Sciatic nerve (tissue), 2 donors: ENCODE measurements at regions of chr4 and their contacts with region 1.

Region 1: DNA sequence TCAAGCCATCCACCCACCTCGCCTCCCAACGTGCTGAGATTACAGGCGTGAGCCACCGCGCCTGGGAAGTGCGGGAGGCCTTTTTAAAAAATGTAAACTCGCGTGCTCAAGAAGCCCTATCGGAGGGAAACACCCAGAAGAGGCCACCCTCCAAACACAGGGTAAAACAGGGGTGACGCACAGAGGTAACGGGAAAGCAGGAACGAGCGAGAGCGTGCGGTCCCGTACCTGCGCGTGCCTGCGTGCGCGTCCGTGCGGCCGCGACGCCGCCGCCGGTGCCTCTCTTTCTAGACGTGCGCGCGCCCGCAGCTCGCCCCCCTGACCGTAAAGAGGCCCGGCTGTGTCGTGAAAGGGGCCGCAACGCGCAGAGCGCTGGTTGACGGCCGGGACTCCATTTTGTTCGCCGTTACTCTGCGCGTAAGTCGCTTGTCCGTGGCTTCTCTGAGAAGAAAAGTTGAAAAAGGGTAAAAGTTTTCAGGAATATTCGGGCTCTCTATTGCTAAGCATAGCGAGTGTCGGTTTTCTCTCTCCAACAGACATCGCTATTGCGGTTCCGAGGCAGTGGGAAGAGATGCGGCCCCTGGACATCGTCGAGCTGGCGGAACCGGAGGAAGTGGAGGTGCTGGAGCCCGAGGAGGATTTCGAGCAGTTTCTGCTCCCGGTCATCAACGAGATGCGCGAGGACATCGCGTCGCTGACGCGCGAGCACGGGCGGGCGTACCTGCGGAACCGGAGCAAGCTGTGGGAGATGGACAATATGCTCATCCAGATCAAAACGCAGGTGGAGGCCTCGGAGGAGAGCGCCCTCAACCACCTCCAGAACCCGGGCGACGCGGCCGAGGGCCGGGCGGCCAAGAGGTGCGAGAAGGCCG is at the start of gene MRFAP1:
- DNase-seq: peak; percentile 96
- ATAC-seq: peak; percentile 97
- total RNA-seq, gene MRFAP1: 276 TPM

Region 2: GRCh38 chr4:6128221-6128850 is 512.2 kb before region 1 on chr4:
- intact Hi-C with region 1: no loop called
- DNase-seq: no peak
- ATAC-seq: no peak

Region 3: GRCh38 chr4:6673660-6674499 is 33.4 kb after region 1 on chr4:
- intact Hi-C with region 1: no loop called
- DNase-seq: peak; percentile 96
- ATAC-seq: peak; percentile 99

Region 4: DNA sequence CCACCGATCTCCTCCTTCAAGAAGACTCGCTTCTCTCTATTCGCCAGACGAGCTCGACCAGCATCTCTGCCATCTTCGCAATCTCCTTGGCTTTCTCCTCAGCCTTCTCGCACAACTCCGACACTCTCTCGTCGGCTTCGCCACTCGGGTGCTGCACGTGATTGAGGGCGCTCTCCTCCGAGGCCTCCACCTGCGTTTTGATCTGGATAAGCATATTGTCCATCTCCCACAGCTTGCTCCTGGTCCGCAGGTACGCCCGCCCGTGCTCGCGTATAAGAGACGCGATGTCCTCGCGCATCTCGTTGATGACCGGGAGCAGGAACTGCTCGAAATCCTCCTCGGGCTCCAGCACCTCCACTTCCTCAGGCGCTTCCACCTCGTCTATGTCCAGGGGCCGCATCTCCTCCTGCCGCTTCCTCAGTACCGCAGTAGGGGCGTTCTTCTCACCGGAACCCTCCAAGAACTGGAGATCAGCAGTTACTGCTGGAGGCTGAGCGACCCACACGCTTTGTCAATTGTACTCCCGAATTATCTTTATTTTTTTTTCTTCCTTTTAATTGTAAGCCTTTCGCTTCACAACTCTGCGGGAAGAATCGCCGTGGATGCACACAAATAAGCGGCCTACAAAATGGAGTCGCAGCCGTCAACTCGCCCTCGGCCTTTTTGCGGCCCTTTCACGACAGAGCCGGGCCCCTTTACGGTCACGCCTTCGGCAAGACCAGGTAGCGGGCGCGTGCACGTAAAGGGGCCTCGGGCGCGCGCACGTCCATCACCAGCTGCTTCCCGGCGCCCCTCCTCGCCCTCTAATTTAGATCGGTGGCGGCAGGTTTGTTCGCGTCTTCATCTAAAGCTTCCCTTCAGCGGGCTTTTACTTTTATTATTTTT is 68.9 kb after region 1 on chr4 and contains the start of gene MRFAP1L1:
- intact Hi-C with region 1: loop called (anchors 10 kb)
- DNase-seq: peak; percentile 98
- ATAC-seq: peak; percentile 97
- total RNA-seq, gene MRFAP1L1: 46.0 TPM

Region 5: DNA sequence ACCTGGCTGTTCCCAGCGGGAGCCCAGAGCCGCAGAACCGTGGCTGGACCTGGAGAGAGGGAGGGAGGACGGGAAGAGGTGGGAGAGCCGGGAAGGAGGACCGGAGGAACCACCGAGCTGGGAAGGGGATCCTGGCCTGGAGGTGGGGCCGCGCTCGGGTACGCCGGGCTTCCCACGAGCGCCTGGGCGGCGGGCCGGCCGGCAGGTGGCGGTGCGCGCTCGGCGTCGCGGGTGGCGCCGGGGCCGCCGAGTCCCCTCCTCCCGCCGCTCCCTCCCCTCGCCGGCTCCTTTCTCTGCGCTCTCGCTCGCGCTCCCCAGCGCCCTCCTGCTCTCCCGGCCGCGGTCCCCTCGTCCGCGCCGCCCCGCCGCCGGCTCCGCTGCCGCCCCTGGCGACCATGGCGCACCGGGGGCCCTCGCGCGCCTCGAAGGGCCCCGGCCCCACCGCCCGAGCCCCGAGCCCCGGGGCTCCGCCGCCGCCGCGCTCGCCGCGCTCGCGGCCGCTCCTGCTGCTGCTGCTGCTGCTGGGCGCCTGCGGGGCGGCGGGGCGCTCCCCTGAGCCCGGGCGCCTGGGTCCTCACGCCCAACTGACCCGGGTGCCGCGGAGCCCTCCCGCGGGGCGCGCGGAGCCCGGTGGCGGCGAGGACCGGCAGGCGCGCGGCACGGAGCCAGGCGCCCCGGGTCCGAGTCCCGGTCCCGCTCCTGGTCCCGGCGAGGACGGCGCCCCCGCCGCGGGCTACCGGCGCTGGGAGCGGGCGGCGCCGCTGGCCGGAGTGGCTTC is 551.9 kb after region 1 on chr4 and contains the start of gene SORCS2:
- intact Hi-C with region 1: no loop called
- DNase-seq: peak; percentile 84
- ATAC-seq: peak; percentile 59
- total RNA-seq, gene SORCS2: 52.5 TPM